Transverse colon (tissue), 4 donors: ENCODE measurements at regions of chr3 and their contacts with region 1.

Region 1: GRCh38 chr3:144114767-144115166 is 143.1 kb downstream of the DIPK2A start:
- DNase-seq: no peak
- H3K4me3 ChIP-seq: no peak overlapping the region
- H3K27ac ChIP-seq: no peak overlapping the region
- H3K4me1 ChIP-seq: no peaks in the 10 kb centered on the region
- H3K27me3 ChIP-seq: no peaks in the 10 kb centered on the region
- CTCF ChIP-seq: no peak
- EP300 ChIP-seq: no peak
- POLR2A ChIP-seq: no peak

Region 2: GRCh38 chr3:142817897-142818296 is 1296.9 kb before region 1 on chr3:
- in situ Hi-C with region 1: no loop called
- intact Hi-C with region 1: loop called (anchors 5 kb)
- DNase-seq: no peak
- H3K4me3 ChIP-seq: no peak overlapping the region
- H3K27ac ChIP-seq: no peak overlapping the region
- H3K4me1 ChIP-seq: no peaks in the 10 kb centered on the region
- H3K27me3 ChIP-seq: peaks cover 6% of the 10 kb centered on the region
- CTCF ChIP-seq: no peak
- EP300 ChIP-seq: no peak
- POLR2A ChIP-seq: no peak

Region 3: GRCh38 chr3:144770915-144771351 is 656.2 kb after region 1 on chr3:
- in situ Hi-C with region 1: no loop called
- intact Hi-C with region 1: no loop called
- DNase-seq: no peak
- H3K4me3 ChIP-seq: no peak overlapping the region
- H3K27ac ChIP-seq: no peak overlapping the region
- H3K4me1 ChIP-seq: no peaks in the 10 kb centered on the region
- H3K27me3 ChIP-seq: no peaks in the 10 kb centered on the region
- CTCF ChIP-seq: peak in 1 of 5 experiments; percentile 26
- EP300 ChIP-seq: no peak
- POLR2A ChIP-seq: no peak